ENCODE measurements at regions of chr16 and their contacts with region 1.

Region 1: DNA sequence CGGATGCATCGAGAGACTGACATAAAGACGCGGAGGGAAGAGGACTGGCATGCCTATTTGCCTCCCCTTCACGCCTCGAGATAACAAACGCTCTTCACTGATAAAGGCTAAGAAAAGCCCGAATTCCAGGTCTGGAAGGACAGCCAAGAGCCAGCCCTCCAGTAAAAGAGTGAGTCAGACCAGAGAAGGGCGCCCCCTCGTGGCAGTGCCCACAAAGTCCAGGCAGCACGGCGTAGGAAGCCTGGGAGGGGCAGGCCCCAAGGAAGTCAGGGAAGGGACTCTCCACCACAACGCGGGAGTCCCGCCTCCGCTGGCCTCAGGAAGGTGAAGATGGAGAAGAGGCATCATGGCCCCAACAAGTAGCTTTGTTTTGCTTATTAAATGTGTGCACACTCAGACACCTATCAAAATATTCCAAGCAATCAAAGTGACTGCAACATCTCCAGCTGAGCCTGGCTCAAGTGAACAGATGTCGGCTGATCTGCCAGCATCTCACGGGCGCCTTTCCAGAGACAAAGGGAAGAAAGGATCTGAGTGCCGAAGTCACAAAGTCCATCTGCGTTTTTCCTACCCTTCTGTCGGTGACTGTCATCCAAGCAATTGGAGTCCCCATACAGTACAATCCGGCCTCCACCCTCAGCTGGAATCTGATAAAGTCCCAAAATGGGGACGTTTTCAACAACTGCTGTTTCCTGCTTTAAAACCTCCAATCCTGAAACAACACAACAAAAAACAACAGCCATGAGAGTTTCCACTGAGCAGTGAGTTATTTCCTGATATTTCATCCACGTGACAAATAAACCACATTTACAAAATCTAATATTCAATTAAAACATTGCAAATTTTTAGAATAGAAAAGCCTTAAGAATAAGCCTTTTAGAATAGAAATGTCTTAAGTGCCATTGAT is 20.4 kb upstream of the SLC38A8 start:
- DNase-seq: no peak
- H3K4me3 ChIP-seq: no peak overlapping the region
- CTCF ChIP-seq: peak; percentile 95

Region 2: GRCh38 chr16:83801953-83802533 is 260.9 kb before region 1 on chr16:
- CTCF ChIA-PET with region 1: no interaction called
- POLR2A ChIA-PET with region 1: no interaction called
- DNase-seq: peak; percentile 46
- H3K4me3 ChIP-seq: peak overlapping the region; percentile 16
- CTCF ChIP-seq: no peak

Region 3: GRCh38 chr16:83826146-83826913 is 236.7 kb before region 1 on chr16:
- CTCF ChIA-PET with region 1: interaction called, 11 read pairs
- POLR2A ChIA-PET with region 1: no interaction called
- DNase-seq: no peak
- H3K4me3 ChIP-seq: no peak overlapping the region
- CTCF ChIP-seq: peak; percentile 94

Region 4: GRCh38 chr16:83952940-83953795 is 109.8 kb before region 1 on chr16 and contains the start of gene OSGIN1:
- CTCF ChIA-PET with region 1: interaction called, 662 read pairs
- POLR2A ChIA-PET with region 1: interaction called, 3 read pairs
- DNase-seq: peak; percentile 34
- H3K4me3 ChIP-seq: peak within 1 kb of the TSS; percentile 69
- CTCF ChIP-seq: no peak

Region 5: GRCh38 chr16:83975590-83976260 is 87.3 kb before region 1 on chr16:
- CTCF ChIA-PET with region 1: interaction called, 42 read pairs
- POLR2A ChIA-PET with region 1: no interaction called
- DNase-seq: no peak
- H3K4me3 ChIP-seq: no peak overlapping the region
- CTCF ChIP-seq: no peak

Region 6: GRCh38 chr16:84013787-84014569 is 49.0 kb before region 1 on chr16:
- CTCF ChIA-PET with region 1: interaction called, 10 read pairs
- POLR2A ChIA-PET with region 1: no interaction called
- DNase-seq: no peak
- H3K4me3 ChIP-seq: no peak overlapping the region
- CTCF ChIP-seq: no peak

Region 7: GRCh38 chr16:84084570-84085270 is 21.7 kb after region 1 on chr16:
- CTCF ChIA-PET with region 1: interaction called, 295 read pairs
- POLR2A ChIA-PET with region 1: no interaction called
- DNase-seq: no peak
- H3K4me3 ChIP-seq: no peak overlapping the region
- CTCF ChIP-seq: peak; percentile 88

Region 8: GRCh38 chr16:84175350-84176081 is 112.5 kb after region 1 on chr16:
- CTCF ChIA-PET with region 1: interaction called, 39 read pairs
- POLR2A ChIA-PET with region 1: no interaction called
- DNase-seq: no peak
- H3K4me3 ChIP-seq: no peak overlapping the region
- CTCF ChIP-seq: peak; percentile 89

Measured in AG04449 (cell line).